ENCODE measurements at regions of chr2 and their contacts with region 1.

Region 1: DNA sequence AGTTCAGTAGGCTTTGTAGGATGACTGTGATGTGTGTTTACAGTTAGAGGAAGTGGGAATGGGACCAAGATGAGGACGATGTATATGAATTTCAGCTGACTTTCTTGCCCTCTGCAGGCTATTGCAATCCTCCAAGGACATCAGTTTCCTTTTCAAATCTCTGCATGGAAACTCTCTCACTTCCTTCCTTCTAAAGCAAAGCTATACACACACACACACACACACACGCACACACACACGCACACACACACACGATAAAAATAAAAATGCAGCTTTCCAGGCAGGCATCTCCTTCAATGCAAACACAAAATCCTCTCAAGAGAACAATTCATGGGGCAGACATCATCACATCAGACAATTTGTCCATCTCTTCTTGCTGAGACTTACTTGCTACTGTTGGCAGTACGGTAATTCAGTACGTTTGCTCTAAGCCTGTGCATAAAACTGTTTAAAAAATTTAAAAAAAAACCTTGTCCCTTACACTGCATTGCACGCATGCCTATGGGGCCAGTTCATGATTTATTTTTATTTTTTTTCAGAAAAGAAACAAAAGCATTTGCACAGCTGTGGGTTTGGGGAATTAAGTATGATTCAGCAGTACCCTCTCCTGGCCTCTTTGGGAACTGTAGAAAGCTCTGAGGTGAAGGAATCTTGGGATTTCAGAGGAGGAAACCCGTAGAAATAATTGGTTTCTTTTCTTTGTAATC is 27.1 kb upstream of the ICOS start:
- DNase-seq: peak in 1 of 2 donors; percentile 69
- ATAC-seq: peak in 2 of 3 donors; percentile 27 to 49
- H3K4me3 ChIP-seq: no peak overlapping the region
- H3K4me3 Mint-ChIP-seq: no peak overlapping the region
- H3K27ac ChIP-seq: no peak overlapping the region
- H3K27ac Mint-ChIP-seq: no peak overlapping the region
- H3K4me1 ChIP-seq: peaks cover 7% of the 10 kb centered on the region
- H3K4me1 Mint-ChIP-seq: peaks cover 4 to 11% of the 10 kb centered on the region in 2 donors
- H3K27me3 ChIP-seq: no peaks in the 10 kb centered on the region
- H3K27me3 Mint-ChIP-seq: peaks cover 6 to 7% of the 10 kb centered on the region in 2 donors
- CTCF ChIP-seq: peak; percentile 32

Region 2: DNA sequence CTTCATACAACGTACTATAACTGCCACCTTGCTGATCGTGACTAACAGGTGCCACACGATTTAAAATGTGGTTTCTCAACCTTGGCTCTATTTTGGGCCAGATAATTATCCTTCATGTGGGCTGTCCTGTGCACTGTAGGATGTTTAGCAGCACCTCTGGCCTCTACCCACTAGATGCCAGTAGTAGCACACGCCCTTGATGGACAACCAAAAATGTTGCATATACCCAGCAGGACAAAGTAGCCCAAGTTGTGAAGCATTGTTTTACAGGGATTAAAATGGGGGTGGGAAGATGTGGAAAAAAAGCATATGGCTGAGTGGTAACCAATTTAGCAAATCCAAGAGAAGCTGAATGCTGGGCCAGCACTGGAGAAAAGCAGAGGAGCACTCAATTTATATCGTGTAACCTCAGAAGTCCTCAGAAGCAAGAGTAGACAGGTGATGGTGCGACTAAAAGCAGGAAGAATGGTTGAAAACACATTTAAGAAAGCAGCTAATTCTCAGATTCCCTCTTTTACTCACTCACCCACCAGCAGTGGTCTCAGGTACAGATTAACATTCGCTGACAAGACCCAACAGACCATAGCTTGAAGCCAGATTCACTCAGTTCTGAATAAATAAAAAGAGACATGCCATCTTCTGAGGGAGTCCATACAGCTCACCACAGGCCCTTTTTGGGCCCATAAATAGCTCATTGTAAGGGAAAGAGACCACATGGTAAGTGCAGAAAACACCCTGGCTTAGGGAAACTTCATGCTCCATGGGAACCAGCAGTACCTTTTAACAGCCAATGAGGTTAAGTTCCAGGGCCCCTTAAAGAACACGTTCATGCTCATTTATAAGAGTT is 424.9 kb before region 1 on chr2:
- intact Hi-C with region 1: loop called (anchors 5 kb)
- DNase-seq: peak in 1 of 2 donors; percentile 81
- ATAC-seq: peak in 2 of 3 donors; percentile 70 to 91
- H3K4me3 ChIP-seq: no peak overlapping the region
- H3K4me3 Mint-ChIP-seq: no peak overlapping the region
- H3K27ac ChIP-seq: no peak overlapping the region
- H3K27ac Mint-ChIP-seq: no peak overlapping the region
- H3K4me1 ChIP-seq: no peaks in the 10 kb centered on the region
- H3K4me1 Mint-ChIP-seq: no peaks in the 10 kb centered on the region
- H3K27me3 ChIP-seq: no peaks in the 10 kb centered on the region
- H3K27me3 Mint-ChIP-seq: no peaks in the 10 kb centered on the region
- CTCF ChIP-seq: peak; percentile 41

Measured in natural killer cell (primary cell).